PC-3 (cell line): ENCODE measurements at regions of chr12 and their contacts with region 1.

Region 1: GRCh38 chr12:12786716-12787601 is 1.5 kb downstream of the APOLD1 start:
- DNase-seq: peak; percentile 77
- ATAC-seq: peak; percentile 76
- H3K4me3 ChIP-seq: peak overlapping the region; percentile 63
- H3K27ac ChIP-seq: peak overlapping the region; percentile 61
- H3K4me1 ChIP-seq: peaks cover 46% of the 10 kb centered on the region
- H3K27me3 ChIP-seq: no peaks in the 10 kb centered on the region
- CTCF ChIP-seq: no peak

Region 2: GRCh38 chr12:12115514-12115913 is 671.4 kb before region 1 on chr12:
- CTCF ChIA-PET with region 1: no interaction called
- POLR2A ChIA-PET with region 1: no interaction called
- intact Hi-C with region 1: no loop called
- DNase-seq: no peak
- ATAC-seq: no peak
- H3K4me3 ChIP-seq: no peak overlapping the region
- H3K27ac ChIP-seq: no peak overlapping the region
- H3K4me1 ChIP-seq: no peaks in the 10 kb centered on the region
- H3K27me3 ChIP-seq: no peaks in the 10 kb centered on the region
- CTCF ChIP-seq: no peak

Region 3: GRCh38 chr12:12749433-12749832 is 37.5 kb before region 1 on chr12:
- CTCF ChIA-PET with region 1: no interaction called
- POLR2A ChIA-PET with region 1: no interaction called
- intact Hi-C with region 1: no loop called
- DNase-seq: no peak
- ATAC-seq: no peak
- H3K4me3 ChIP-seq: no peak overlapping the region
- H3K27ac ChIP-seq: no peak overlapping the region
- H3K4me1 ChIP-seq: peaks cover 15% of the 10 kb centered on the region
- H3K27me3 ChIP-seq: no peaks in the 10 kb centered on the region
- CTCF ChIP-seq: no peak

Region 4: GRCh38 chr12:12803186-12803585 is 16.2 kb after region 1 on chr12:
- CTCF ChIA-PET with region 1: no interaction called
- POLR2A ChIA-PET with region 1: interaction called, 5 read pairs
- intact Hi-C with region 1: loop called (anchors 2 kb)
- DNase-seq: peak; percentile 95
- ATAC-seq: peak; percentile 75
- H3K4me3 ChIP-seq: no peak overlapping the region
- H3K27ac ChIP-seq: peak overlapping the region; percentile 100
- H3K4me1 ChIP-seq: peaks cover 59% of the 10 kb centered on the region
- H3K27me3 ChIP-seq: no peaks in the 10 kb centered on the region
- CTCF ChIP-seq: no peak

Region 5: GRCh38 chr12:12813120-12814101 is 26.5 kb after region 1 on chr12 and contains the start of gene DDX47:
- CTCF ChIA-PET with region 1: no interaction called
- POLR2A ChIA-PET with region 1: no interaction called
- intact Hi-C with region 1: loop called (anchors 2 kb)
- DNase-seq: peak; percentile 91
- ATAC-seq: peak; percentile 77
- H3K4me3 ChIP-seq: peak within 1 kb of the TSS; percentile 93
- H3K27ac ChIP-seq: peak within 1 kb of the TSS; percentile 61
- H3K4me1 ChIP-seq: peaks cover 43% of the 10 kb centered on the region
- H3K27me3 ChIP-seq: no peaks in the 10 kb centered on the region
- CTCF ChIP-seq: peak; percentile 74
- total RNA-seq, gene DDX47: 58.9 and 59.0 TPM in 2 replicates

Region 6: DNA sequence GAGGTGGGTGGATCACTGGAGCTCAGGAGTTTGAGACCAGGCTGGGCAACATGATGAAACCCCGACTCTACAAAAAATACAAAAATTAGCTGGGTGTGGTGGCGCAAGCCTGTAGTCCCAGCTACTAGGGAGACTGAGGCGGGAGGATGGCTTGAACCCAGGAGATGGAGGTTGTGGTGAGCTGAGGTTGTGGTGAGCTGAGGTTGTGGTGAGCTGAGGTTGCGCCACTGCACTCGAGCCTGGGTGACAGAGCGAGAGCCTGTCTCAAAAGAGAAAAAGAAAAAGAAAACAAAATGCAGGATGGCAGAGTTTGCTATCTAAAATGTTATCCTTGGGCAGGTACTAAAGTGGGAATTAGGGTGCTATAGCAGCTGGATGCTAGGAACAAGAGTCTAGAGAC is 93.6 kb after region 1 on chr12:
- CTCF ChIA-PET with region 1: no interaction called
- POLR2A ChIA-PET with region 1: no interaction called
- intact Hi-C with region 1: no loop called
- DNase-seq: no peak
- ATAC-seq: no peak
- H3K4me3 ChIP-seq: no peak overlapping the region
- H3K27ac ChIP-seq: peak overlapping the region; percentile 90
- H3K4me1 ChIP-seq: peaks cover 61% of the 10 kb centered on the region
- H3K27me3 ChIP-seq: no peaks in the 10 kb centered on the region
- CTCF ChIP-seq: no peak

Region 7: GRCh38 chr12:12890815-12891645 is 104.1 kb after region 1 on chr12 and contains the start of gene GPRC5A:
- CTCF ChIA-PET with region 1: no interaction called
- POLR2A ChIA-PET with region 1: interaction called, 6 read pairs
- intact Hi-C with region 1: loop called (anchors 2 kb)
- DNase-seq: peak; percentile 97
- ATAC-seq: peak; percentile 75
- H3K4me3 ChIP-seq: peak within 1 kb of the TSS; percentile 97
- H3K27ac ChIP-seq: peak within 1 kb of the TSS; percentile 99
- H3K4me1 ChIP-seq: peaks cover 48% of the 10 kb centered on the region
- H3K27me3 ChIP-seq: no peaks in the 10 kb centered on the region
- CTCF ChIP-seq: peak; percentile 50; the same call in 1 of the 2 replicates
- total RNA-seq, gene GPRC5A: 140 and 144 TPM in 2 replicates

Region 8: GRCh38 chr12:12983420-12984035 is 196.6 kb after region 1 on chr12:
- CTCF ChIA-PET with region 1: no interaction called
- POLR2A ChIA-PET with region 1: no interaction called
- intact Hi-C with region 1: loop called (anchors 2 kb)
- DNase-seq: peak; percentile 63
- ATAC-seq: peak; percentile 38; the same call in 1 of the 2 replicates
- H3K4me3 ChIP-seq: no peak overlapping the region
- H3K27ac ChIP-seq: no peak overlapping the region
- H3K4me1 ChIP-seq: peaks cover 15% of the 10 kb centered on the region
- H3K27me3 ChIP-seq: no peaks in the 10 kb centered on the region
- CTCF ChIP-seq: peak; percentile 77